ENCODE measurements at regions of chr11 and their contacts with region 1.

Region 1: DNA sequence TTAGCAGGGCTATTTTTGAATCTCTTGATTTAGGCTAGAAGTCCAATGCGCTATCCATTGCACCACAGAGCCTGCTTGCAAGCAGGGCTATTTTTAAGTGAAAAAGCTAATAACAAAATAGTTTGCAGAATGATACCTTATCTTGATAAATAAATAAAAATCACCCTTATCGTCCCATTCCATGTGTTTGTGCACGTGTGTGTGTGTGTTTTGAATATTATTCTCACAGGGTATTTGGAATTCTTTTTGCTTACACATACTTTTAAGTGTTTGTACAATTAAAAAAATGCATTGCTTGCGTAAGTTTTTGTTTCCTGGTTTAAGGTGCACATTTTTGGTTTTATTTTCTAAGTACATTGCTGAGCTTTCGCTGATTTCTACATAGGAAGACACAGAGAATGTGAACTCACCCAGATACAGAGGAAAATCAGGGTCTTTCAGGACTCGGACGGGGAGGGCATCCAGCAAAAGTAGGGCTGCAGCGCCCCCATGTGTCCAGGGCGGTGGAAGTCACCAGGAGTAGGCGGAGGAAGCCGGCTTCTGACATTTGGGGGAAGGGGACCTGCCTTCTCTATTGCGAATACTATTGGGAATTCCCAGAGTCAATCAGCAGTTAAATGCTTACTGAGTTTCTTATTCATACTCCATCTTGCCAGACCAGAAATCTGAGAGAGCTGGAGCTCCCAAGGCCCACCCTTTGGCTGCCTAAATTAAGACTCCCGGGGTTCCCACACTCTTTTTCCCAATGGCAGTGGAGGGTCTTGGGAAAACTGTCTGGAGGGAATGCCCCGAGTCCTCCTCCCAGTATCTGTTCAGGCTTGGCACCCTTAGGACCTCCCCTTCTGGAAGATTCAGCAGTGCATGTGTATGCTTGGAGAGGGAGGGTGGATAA is 27.2 kb downstream of the SLC1A2 start:
- DNase-seq: peak; percentile 76 to 93 (median 82)
- ATAC-seq: peak; percentile 47 to 87 (median 78)
- H3K4me3 ChIP-seq: no peak overlapping the region
- H3K27ac ChIP-seq: peak overlapping the region in 3 of 4 donors; percentile 52 to 85 (median 73)
- H3K4me1 ChIP-seq: peaks cover 28 to 56% (median 29%) of the 10 kb centered on the region in 3 donors
- H3K27me3 ChIP-seq: no peaks in the 10 kb centered on the region
- CTCF ChIP-seq: peak; percentile 58 to 73 (median 67)

Region 2: DNA sequence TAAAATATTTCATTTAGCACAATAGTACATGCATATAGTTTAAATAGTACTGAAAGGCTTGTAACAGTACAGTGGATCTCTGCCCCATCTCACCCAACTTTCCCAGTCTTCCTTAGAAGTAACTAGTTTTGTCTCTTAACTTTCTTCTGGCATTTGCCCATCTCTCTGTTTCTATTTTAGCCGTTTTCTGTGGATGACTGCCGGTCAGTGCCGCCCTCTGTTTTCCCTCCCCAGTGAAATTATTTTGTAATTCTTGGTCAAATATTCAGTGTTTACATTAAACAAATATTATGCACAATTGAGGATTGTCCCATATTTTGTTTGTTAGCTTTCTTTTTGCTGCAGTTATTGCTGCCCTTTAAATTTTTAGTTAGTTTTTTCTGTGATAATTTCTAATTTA is 467.5 kb before region 1 on chr11:
- intact Hi-C with region 1: loop called in 1 of 3 experiments (anchors 5 kb)
- DNase-seq: no peak
- ATAC-seq: peak in 1 of 4 donors; percentile 12
- H3K4me3 ChIP-seq: no peak overlapping the region
- H3K27ac ChIP-seq: peak overlapping the region in 2 of 4 donors; percentile 1 to 29
- H3K4me1 ChIP-seq: peaks cover 20 to 50% (median 40%) of the 10 kb centered on the region in 3 donors
- H3K27me3 ChIP-seq: no peaks in the 10 kb centered on the region
- CTCF ChIP-seq: no peak

Region 3: DNA sequence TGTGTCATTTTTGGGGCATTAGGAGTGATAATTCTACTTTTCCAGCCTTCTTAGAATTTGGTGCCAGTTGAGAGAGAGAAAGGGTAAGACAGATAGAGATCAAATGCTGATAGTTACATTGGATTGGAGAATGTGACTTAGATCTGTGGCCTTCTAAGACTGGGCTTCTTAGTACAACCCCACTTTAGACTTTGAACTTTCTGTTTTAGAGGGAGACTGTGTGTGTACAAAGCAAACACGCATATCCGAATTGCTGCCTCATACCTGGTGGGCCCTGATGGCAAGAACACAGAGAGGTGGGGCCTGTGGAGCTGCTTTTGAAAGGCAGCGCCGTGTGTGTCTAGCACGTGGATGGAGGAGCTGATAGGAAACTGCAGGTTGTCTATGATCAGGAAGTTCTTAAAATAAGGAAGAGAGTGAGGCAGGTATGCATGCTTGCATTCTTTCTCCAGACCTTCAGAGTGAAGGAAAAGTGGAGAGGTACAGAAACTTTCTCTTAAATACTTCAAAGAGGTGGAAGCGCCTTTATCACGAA is 462.3 kb before region 1 on chr11:
- intact Hi-C with region 1: loop called in 1 of 3 experiments (anchors 10 kb)
- DNase-seq: peak in 3 of 6 donors; percentile 17 to 43 (median 39)
- ATAC-seq: peak; percentile 63 to 87 (median 84)
- H3K4me3 ChIP-seq: no peak overlapping the region
- H3K27ac ChIP-seq: peak overlapping the region in 2 of 4 donors; percentile 16 to 34
- H3K4me1 ChIP-seq: peaks cover 18 to 54% (median 43%) of the 10 kb centered on the region in 3 donors
- H3K27me3 ChIP-seq: no peaks in the 10 kb centered on the region
- CTCF ChIP-seq: no peak

Region 4: DNA sequence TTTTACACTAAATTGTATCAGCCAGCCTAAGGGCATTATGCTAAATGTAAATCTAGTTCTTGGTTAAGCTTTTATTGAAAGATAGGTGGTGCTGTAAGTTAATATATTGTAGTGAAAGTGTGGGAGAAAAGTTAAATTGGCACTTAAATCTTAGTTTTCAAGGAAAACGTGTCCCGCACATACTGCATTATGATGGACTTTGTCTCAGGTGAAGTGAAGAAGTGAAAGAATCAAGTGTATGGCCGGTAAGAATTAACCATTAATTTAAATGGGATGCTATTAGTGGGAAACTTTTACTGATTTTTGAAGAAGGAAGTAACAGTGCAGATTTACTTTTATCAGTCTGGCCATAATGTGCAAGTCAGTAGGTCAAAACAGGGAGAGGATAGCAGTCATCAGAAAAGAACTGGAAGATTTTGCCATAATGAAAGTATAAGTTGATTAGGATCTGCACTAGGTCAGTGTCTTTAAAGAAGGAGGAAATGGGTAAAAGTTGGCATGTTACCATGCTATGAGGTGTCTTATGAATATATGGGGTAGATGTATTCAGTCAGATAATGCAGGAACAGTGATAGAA is 394.1 kb before region 1 on chr11:
- intact Hi-C with region 1: loop called in 1 of 3 experiments (anchors 10 kb)
- DNase-seq: no peak
- ATAC-seq: peak; percentile 69 to 91 (median 86)
- H3K4me3 ChIP-seq: no peak overlapping the region
- H3K27ac ChIP-seq: no peak overlapping the region
- H3K4me1 ChIP-seq: peaks cover 6 to 18% (median 17%) of the 10 kb centered on the region in 3 donors
- H3K27me3 ChIP-seq: no peaks in the 10 kb centered on the region
- CTCF ChIP-seq: peak in 2 of 4 donors; percentile 24 to 26

Region 5: GRCh38 chr11:35288817-35289541 is 103.2 kb before region 1 on chr11:
- intact Hi-C with region 1: no loop called
- DNase-seq: no peak
- ATAC-seq: peak in 1 of 4 donors; percentile 28
- H3K4me3 ChIP-seq: no peak overlapping the region
- H3K27ac ChIP-seq: no peak overlapping the region
- H3K4me1 ChIP-seq: peaks cover 0 to 14% (median 3%) of the 10 kb centered on the region in 3 donors
- H3K27me3 ChIP-seq: no peaks in the 10 kb centered on the region
- CTCF ChIP-seq: no peak

Region 6: GRCh38 chr11:35330931-35331330 is 61.2 kb before region 1 on chr11:
- intact Hi-C with region 1: no loop called
- DNase-seq: no peak
- ATAC-seq: peak in 3 of 4 donors; percentile 16 to 52 (median 30)
- H3K4me3 ChIP-seq: no peak overlapping the region
- H3K27ac ChIP-seq: peak overlapping the region in 1 of 4 donors; percentile 4
- H3K4me1 ChIP-seq: peaks cover 0 to 5% (median 0%) of the 10 kb centered on the region in 3 donors
- H3K27me3 ChIP-seq: no peaks in the 10 kb centered on the region
- CTCF ChIP-seq: no peak

Measured in pancreas (tissue), 10 donors.